GM10248 (cell line): ENCODE measurements at regions of chr9 and their contacts with region 1.

Region 1: DNA sequence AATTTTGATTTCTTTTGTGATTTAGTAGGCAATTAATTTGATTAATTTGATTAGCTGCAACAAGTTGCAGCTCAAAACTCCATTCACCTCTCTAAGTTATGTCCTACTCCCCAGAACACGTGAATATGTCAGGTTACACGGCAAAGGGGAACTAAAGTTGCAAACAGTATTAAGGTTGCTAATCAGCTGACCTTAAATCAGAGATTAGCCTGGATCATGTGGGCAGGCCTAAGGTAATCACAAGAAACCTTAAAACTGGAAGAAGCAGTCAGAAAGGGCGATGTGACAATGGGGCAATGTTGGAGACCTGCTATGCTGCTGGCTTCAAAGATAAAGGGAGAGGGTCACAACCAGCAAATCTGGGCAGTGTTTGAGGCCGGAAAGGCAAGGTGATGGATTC is 47.3 kb upstream of the ANXA1 start:
- DNase-seq: no peak
- CTCF ChIP-seq: no peak

Region 2: DNA sequence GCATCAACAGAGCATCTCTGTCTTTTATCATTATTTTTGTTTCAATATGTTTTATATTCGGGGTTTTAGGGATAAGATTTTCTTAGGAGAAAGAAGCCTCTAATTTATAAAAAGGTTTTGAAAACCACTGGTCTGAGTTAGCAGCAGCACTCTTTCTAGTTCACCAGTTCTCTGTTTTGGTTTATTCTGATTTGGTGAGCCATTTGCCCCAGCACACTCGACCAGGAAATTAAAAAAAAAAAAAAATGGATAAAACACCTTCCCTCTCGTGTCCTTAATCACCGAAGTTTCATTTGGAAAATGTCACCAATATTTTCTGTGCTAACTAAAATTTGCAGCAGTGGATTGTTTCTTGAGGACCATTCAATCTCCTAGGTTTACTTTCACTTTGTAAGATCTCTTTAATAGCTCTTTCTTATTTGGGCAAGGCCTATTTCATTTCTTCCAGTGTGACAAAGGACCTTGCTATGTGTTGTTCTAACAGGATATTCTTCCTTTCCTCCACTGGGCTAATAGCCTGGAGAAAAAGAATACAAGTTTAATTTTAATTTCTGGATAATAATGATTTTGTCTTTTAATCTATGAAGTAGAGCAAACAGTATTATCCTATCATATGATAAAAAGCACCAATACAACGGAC is 10.5 kb before region 1 on chr9:
- CTCF ChIA-PET with region 1: interaction called, 25 read pairs
- POLR2A ChIA-PET with region 1: no interaction called
- DNase-seq: no peak
- CTCF ChIP-seq: no peak

Region 3: GRCh38 chr9:73116031-73116430 is 11.7 kb after region 1 on chr9:
- CTCF ChIA-PET with region 1: interaction called, 28 read pairs
- POLR2A ChIA-PET with region 1: no interaction called
- DNase-seq: peak; percentile 17
- CTCF ChIP-seq: no peak

Region 4: GRCh38 chr9:73137286-73137899 is 33.1 kb after region 1 on chr9:
- CTCF ChIA-PET with region 1: no interaction called
- POLR2A ChIA-PET with region 1: no interaction called
- DNase-seq: no peak
- CTCF ChIP-seq: no peak

Region 5: GRCh38 chr9:73176450-73176875 is 72.1 kb after region 1 on chr9:
- CTCF ChIA-PET with region 1: interaction called, 89 read pairs
- POLR2A ChIA-PET with region 1: no interaction called
- DNase-seq: no peak
- CTCF ChIP-seq: no peak

Region 6: GRCh38 chr9:73183917-73184861 is 79.8 kb after region 1 on chr9:
- CTCF ChIA-PET with region 1: interaction called, 89 read pairs
- POLR2A ChIA-PET with region 1: no interaction called
- DNase-seq: peak; percentile 18
- CTCF ChIP-seq: peak; percentile 22

Region 7: GRCh38 chr9:73259086-73259696 is 154.8 kb after region 1 on chr9:
- CTCF ChIA-PET with region 1: no interaction called
- POLR2A ChIA-PET with region 1: no interaction called
- DNase-seq: no peak
- CTCF ChIP-seq: no peak